ENCODE measurements at regions of chr2 and their contacts with region 1.

Region 1: GRCh38 chr2:218357236-218358159 is 841 bp downstream of the CATIP start:
- DNase-seq: no peak
- H3K4me3 ChIP-seq: no peak overlapping the region
- H3K27ac ChIP-seq: no peak overlapping the region
- H3K4me1 ChIP-seq: no peaks in the 10 kb centered on the region
- H3K27me3 ChIP-seq: no peaks in the 10 kb centered on the region
- CTCF ChIP-seq: no peak
- POLR2A ChIP-seq: no peak

Region 2: GRCh38 chr2:218301176-218301819 is 56.2 kb before region 1 on chr2:
- intact Hi-C with region 1: loop called (anchors 5 kb)
- DNase-seq: no peak
- H3K4me3 ChIP-seq: no peak overlapping the region
- H3K27ac ChIP-seq: no peak overlapping the region
- H3K4me1 ChIP-seq: peaks cover 21% of the 10 kb centered on the region
- H3K27me3 ChIP-seq: no peaks in the 10 kb centered on the region
- CTCF ChIP-seq: peak; percentile 89 to 98 (median 91)
- POLR2A ChIP-seq: no peak